Body of pancreas (tissue), 4 donors: ENCODE measurements at regions of chr20 and their contacts with region 1.

Region 1: GRCh38 chr20:58980700-58981627 is at the start of gene NELFCD:
- DNase-seq: peak; percentile 86 to 92 (median 90)
- ATAC-seq: peak; percentile 96
- H3K4me3 ChIP-seq: peak within 1 kb of the TSS; percentile 22 to 33
- H3K27ac ChIP-seq: peak within 1 kb of the TSS; percentile 37 to 79 (median 69)
- H3K4me1 ChIP-seq: peaks cover 24% of the 10 kb centered on the region
- H3K27me3 ChIP-seq: no peaks in the 10 kb centered on the region
- CTCF ChIP-seq: no peak
- POLR2A ChIP-seq: peak; percentile 37 to 79 (median 71)
- total RNA-seq, gene NELFCD: 35.9 to 45.9 TPM

Region 2: GRCh38 chr20:58721951-58722778 is 258.8 kb before region 1 on chr20:
- intact Hi-C with region 1: no loop called
- DNase-seq: peak in 3 of 4 donors; percentile 6 to 32 (median 8)
- ATAC-seq: no peak
- H3K4me3 ChIP-seq: no peak overlapping the region
- H3K27ac ChIP-seq: no peak overlapping the region
- H3K4me1 ChIP-seq: no peaks in the 10 kb centered on the region
- H3K27me3 ChIP-seq: no peaks in the 10 kb centered on the region
- CTCF ChIP-seq: no peak
- POLR2A ChIP-seq: no peak

Region 3: GRCh38 chr20:58888521-58889333 is 92.2 kb before region 1 on chr20:
- intact Hi-C with region 1: loop called (anchors 10 kb)
- DNase-seq: peak; percentile 82 to 85 (median 84)
- ATAC-seq: peak; percentile 69
- H3K4me3 ChIP-seq: peak overlapping the region; percentile 16 to 40
- H3K27ac ChIP-seq: peak overlapping the region; percentile 29 to 99 (median 76)
- H3K4me1 ChIP-seq: peaks cover 13% of the 10 kb centered on the region
- H3K27me3 ChIP-seq: no peaks in the 10 kb centered on the region
- CTCF ChIP-seq: no peak
- POLR2A ChIP-seq: peak; percentile 89 to 91 (median 91)

Region 4: GRCh38 chr20:58911970-58912369 is 69.0 kb before region 1 on chr20:
- intact Hi-C with region 1: loop called (anchors 10 kb)
- DNase-seq: no peak
- ATAC-seq: no peak
- H3K4me3 ChIP-seq: no peak overlapping the region
- H3K27ac ChIP-seq: no peak overlapping the region
- H3K4me1 ChIP-seq: peaks cover 24% of the 10 kb centered on the region
- H3K27me3 ChIP-seq: no peaks in the 10 kb centered on the region
- CTCF ChIP-seq: no peak
- POLR2A ChIP-seq: no peak